ENCODE measurements at regions of chr11 and their contacts with region 1.

Region 1: DNA sequence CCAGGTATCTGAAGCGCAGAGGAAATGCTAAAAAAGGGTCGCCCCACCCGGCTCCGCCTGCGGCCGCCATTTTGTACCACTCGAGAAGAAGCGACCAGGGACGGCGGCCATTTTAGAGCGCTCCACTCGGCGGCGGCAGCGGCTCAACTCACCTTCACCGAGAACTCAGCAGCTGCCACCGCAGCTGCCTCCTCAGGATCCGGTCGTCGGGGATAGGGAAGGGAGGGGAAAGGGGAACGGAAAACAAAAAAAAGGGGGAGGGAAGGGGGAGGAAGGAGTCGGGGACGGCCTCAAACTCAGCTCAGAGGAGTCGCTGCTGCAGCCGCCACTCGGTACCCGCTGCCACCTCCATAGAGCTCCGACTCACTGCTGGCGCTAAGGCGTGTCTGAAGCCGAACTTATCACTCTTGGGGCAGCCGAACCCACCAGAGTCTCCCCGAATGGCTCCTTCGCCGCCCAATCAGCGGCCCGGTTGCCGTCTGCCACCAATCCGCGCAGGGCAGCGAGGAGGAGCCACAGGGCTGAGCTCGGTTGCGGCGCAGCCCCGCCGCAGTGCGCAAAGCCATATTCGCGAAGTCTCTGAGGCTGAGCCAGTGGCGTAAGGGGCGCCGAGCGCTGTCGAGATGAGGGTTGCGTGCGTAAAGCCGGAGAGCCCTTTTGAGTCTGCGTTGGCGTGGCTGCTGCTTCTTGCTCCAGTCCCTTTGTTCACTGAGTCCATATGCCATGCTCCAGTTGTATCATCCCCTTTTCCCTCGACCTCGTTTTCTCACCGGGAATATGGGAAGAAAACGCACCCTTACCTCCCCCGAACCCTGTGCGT is at the start of gene EIF4G2:
- DNase-seq: peak; percentile 95 to 99 (median 98)
- ATAC-seq: peak; percentile 90
- H3K4me3 ChIP-seq: peak within 1 kb of the TSS; percentile 85 to 87
- H3K4me3 Mint-ChIP-seq: peak within 1 kb of the TSS; percentile 97
- H3K27ac ChIP-seq: peak within 1 kb of the TSS; percentile 92 to 96
- H3K27ac Mint-ChIP-seq: peak within 1 kb of the TSS; percentile 99
- H3K4me1 ChIP-seq: peaks cover 47% of the 10 kb centered on the region
- H3K4me1 Mint-ChIP-seq: peaks cover 45% of the 10 kb centered on the region
- H3K27me3 ChIP-seq: no peaks in the 10 kb centered on the region
- H3K27me3 Mint-ChIP-seq: no peaks in the 10 kb centered on the region
- CTCF ChIP-seq: no peak
- total RNA-seq, gene EIF4G2: 1,089 to 1,144 TPM

Region 2: DNA sequence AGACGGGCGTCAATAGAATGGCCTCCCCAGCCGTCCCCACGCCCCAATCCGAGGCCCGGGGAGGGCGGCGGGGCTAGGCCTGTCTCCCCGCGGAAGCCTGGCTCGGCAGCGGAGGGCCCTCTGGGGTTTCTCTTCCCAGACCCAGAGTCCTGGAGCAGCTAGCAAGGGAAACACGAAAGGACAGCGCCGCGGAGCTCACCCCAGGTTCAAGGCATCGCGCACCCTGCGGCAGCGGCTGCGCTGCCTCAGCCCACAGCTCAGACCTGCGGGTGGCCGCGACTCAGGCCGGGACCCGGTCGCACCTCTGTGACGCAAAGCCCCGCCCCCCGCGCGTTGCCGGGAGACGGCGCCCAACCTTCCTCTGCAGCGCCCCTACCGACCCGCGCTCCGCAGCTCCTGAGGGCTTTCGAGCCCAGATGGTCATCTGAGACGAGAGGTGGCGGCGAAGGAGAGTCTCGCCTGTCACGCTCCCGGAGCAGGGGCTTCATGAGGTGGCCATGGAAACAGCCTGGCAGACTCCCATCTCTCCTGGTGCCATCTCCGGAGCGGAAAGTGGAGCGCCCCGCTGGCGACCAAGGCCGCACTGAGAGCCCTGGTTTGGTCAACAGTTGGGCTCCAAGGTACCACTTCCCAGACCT is 267.7 kb before region 1 on chr11 and contains the start of gene RNF141:
- CTCF ChIA-PET with region 1: no interaction called
- POLR2A ChIA-PET with region 1: interaction called, 4 read pairs
- intact Hi-C with region 1: loop called in 1 of 2 experiments (anchors 2 kb)
- DNase-seq: peak; percentile 89 to 98 (median 95)
- ATAC-seq: peak; percentile 98
- H3K4me3 ChIP-seq: peak within 1 kb of the TSS; percentile 78 to 83
- H3K4me3 Mint-ChIP-seq: peak within 1 kb of the TSS; percentile 91
- H3K27ac ChIP-seq: peak within 1 kb of the TSS; percentile 77 to 85
- H3K27ac Mint-ChIP-seq: peak within 1 kb of the TSS; percentile 89
- H3K4me1 ChIP-seq: peaks cover 13% of the 10 kb centered on the region
- H3K4me1 Mint-ChIP-seq: peaks cover 32% of the 10 kb centered on the region
- H3K27me3 ChIP-seq: no peaks in the 10 kb centered on the region
- H3K27me3 Mint-ChIP-seq: no peaks in the 10 kb centered on the region
- CTCF ChIP-seq: peak; percentile 85
- total RNA-seq, gene RNF141: 17.3 to 19.2 TPM

Region 3: GRCh38 chr11:10797531-10797930 is 11.2 kb before region 1 on chr11:
- CTCF ChIA-PET with region 1: interaction called, 51 read pairs
- POLR2A ChIA-PET with region 1: interaction called, 67 read pairs
- intact Hi-C with region 1: loop called in 1 of 2 experiments (anchors 1 kb)
- DNase-seq: peak in 1 of 9 experiments; percentile 26
- ATAC-seq: no peak
- H3K4me3 ChIP-seq: no peak overlapping the region
- H3K4me3 Mint-ChIP-seq: no peak overlapping the region
- H3K27ac ChIP-seq: no peak overlapping the region
- H3K27ac Mint-ChIP-seq: no peak overlapping the region
- H3K4me1 ChIP-seq: peaks cover 61% of the 10 kb centered on the region
- H3K4me1 Mint-ChIP-seq: peaks cover 77% of the 10 kb centered on the region
- H3K27me3 ChIP-seq: peaks cover 0 to 5% of the 10 kb centered on the region in 2 experiments
- H3K27me3 Mint-ChIP-seq: no peaks in the 10 kb centered on the region
- CTCF ChIP-seq: no peak

Region 4: DNA sequence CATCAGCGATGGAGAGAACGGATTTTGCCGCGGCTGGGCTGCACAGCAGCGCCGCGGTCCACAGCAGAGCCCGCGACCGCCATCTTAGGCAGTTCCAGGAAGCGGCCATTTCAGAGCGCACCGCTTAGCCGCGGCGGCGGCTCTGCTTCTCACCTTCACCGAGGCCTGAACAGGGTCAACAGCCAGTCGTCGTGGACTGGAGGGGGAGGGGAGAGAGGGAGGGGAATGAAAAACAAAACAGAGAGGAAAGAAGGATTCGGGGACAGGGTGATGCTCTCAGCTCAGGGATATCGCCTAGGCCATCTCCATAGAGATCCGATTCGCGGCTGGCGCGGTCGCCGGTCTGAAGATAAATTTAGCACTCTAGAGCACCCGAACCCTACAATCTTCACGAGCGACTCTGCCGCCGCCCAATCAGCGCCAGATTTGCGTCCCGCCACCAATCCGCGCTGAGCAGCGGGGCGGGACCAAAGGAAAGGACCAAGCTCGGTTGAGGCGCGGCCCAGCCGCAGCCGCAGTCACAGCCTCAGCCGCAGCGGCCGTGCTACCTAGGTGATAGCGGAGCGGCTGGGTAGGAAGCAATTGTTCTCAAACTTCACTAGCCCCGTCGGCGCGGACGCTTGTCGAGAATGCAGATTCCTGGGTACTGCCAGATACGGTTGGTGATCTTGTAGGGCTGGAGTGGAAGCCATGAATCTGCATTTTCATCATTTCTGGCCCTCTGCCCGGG is 49.1 kb after region 1 on chr11 and contains the start of gene ZBED5:
- CTCF ChIA-PET with region 1: interaction called, 10 read pairs
- POLR2A ChIA-PET with region 1: interaction called, 226 read pairs
- intact Hi-C with region 1: loop called (anchors 1 kb)
- DNase-seq: peak; percentile 91 to 98 (median 94)
- ATAC-seq: peak; percentile 90
- H3K4me3 ChIP-seq: peak within 1 kb of the TSS; percentile 68 to 93
- H3K4me3 Mint-ChIP-seq: peak within 1 kb of the TSS; percentile 98
- H3K27ac ChIP-seq: peak within 1 kb of the TSS; percentile 91 to 92
- H3K27ac Mint-ChIP-seq: peak within 1 kb of the TSS; percentile 99
- H3K4me1 ChIP-seq: peaks cover 23% of the 10 kb centered on the region
- H3K4me1 Mint-ChIP-seq: peaks cover 51% of the 10 kb centered on the region
- H3K27me3 ChIP-seq: no peaks in the 10 kb centered on the region
- H3K27me3 Mint-ChIP-seq: no peaks in the 10 kb centered on the region
- CTCF ChIP-seq: no peak
- total RNA-seq, gene ZBED5: 57.5 to 59.2 TPM

Region 5: DNA sequence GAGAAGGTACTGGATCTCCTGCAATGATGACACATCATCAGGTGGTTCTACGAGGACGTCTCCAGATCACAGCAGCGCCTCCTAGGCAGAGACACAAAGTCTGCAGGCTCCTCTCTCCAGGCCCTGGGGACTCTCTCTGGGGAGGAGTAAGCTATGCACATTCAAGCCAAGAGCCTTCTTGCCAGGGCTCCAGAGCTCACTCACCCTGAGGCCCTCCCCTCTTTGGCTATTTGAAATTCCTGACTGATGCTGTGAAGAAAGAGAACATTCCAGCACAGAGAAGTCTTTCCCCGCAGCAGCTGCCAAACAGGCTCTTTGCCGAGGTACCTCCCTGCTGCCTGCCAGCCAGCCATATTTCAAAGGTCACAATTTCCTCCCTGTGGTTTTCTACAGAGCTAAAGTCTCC is 339.3 kb after region 1 on chr11:
- CTCF ChIA-PET with region 1: no interaction called
- POLR2A ChIA-PET with region 1: interaction called, 6 read pairs
- intact Hi-C with region 1: loop called (anchors 2 to 5 kb)
- DNase-seq: peak in 4 of 9 experiments; percentile 26 to 52 (median 38)
- ATAC-seq: no peak
- H3K4me3 ChIP-seq: no peak overlapping the region
- H3K4me3 Mint-ChIP-seq: no peak overlapping the region
- H3K27ac ChIP-seq: no peak overlapping the region
- H3K27ac Mint-ChIP-seq: peak overlapping the region; percentile 79
- H3K4me1 ChIP-seq: peaks cover 42% of the 10 kb centered on the region
- H3K4me1 Mint-ChIP-seq: peaks cover 42% of the 10 kb centered on the region
- H3K27me3 ChIP-seq: no peaks in the 10 kb centered on the region
- H3K27me3 Mint-ChIP-seq: no peaks in the 10 kb centered on the region
- CTCF ChIP-seq: no peak